ENCODE measurements at regions of chr21 and their contacts with region 1.

Region 1: GRCh38 chr21:29849735-29850176 is 90.0 kb downstream of the GRIK1 start:
- DNase-seq: peak in 9 of 10 donors; percentile 20 to 83 (median 57)

Region 2: GRCh38 chr21:29091032-29091431 is 758.7 kb before region 1 on chr21:
- intact Hi-C with region 1: loop called (anchors 10 kb)
- DNase-seq: no peak

Region 3: DNA sequence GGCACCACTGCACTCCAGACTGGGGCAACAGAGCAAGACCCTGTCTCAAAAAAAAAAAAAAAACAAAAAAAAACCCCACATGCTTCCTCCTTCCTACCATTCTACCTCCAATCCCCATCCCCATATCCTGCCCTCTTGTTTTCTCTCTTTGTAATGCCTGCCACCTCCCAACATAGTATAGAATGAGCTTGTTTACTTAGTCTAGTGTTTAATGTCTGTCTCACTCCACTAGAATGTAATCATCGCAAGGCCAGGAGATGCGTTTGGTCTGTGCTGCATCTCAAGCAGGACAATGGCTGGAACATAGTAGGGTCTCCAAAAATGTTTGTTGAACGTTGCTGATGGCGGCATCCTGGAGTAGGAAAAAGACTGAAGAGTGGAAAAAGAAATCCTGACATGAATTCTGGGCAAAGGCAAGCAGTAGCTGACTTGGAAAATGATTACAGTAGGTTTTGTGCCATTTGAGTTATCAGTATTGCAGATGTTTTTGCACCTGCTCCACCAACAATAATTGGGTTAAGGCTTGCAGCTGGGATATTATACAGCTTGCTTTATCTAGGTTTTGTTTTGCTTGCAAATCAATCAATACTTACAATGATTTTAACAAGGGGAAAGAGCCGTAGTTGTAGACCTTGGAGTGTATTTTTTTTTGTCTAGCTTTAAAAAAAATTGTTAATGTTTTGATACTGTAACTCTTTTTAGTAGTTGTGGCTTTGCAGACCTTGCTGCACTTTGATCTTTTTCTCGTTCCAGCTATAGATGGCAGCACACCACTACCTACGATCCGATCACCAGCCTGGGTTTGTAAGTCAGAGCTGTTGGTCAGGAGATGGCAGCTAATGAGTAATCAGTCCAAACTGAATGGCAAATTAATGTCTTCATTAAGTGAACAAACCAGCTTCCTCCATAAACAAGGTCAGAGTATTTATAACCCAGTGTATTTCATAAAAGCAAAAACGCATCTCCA is 488.7 kb before region 1 on chr21:
- intact Hi-C with region 1: loop called (anchors 10 kb)
- DNase-seq: peak in 4 of 10 donors; percentile 11 to 31 (median 20)

Region 4: GRCh38 chr21:29477941-29478340 is 371.8 kb before region 1 on chr21:
- intact Hi-C with region 1: loop called (anchors 2 kb)
- DNase-seq: no peak

Region 5: GRCh38 chr21:29961291-29962027 is 111.7 kb after region 1 on chr21:
- intact Hi-C with region 1: no loop called
- DNase-seq: no peak

Region 6: DNA sequence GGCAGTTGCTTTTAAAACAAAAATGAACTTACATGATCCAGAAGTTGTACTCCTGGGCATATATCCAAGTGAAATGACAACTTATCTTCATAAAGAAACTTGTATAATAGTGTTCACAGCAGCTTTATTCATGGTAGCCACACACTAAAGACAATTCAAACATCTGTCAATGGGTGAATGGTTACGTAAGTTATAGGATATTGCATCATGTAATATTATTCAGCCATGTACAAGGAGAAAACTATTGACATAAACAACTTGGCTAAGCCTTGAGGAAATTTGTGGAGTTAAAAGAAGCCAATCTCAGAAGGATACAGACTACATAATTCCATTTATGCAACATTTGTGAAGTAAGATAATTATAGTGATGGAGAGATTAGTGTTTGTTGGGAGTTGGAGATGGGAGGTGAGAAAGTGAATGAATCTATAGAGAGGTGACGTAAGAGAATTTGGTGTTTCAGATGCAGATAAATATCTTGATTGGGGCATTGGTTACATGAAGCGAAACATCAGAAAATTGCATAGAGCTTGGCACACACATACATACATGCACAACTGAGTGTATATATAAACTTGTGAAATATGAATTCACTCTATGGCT is 140.0 kb after region 1 on chr21:
- intact Hi-C with region 1: no loop called
- DNase-seq: no peak

Measured in posterior cingulate gyrus (tissue), 11 donors.